H1 (cell line): ENCODE measurements at regions of chr7 and their contacts with region 1.

Region 1: DNA sequence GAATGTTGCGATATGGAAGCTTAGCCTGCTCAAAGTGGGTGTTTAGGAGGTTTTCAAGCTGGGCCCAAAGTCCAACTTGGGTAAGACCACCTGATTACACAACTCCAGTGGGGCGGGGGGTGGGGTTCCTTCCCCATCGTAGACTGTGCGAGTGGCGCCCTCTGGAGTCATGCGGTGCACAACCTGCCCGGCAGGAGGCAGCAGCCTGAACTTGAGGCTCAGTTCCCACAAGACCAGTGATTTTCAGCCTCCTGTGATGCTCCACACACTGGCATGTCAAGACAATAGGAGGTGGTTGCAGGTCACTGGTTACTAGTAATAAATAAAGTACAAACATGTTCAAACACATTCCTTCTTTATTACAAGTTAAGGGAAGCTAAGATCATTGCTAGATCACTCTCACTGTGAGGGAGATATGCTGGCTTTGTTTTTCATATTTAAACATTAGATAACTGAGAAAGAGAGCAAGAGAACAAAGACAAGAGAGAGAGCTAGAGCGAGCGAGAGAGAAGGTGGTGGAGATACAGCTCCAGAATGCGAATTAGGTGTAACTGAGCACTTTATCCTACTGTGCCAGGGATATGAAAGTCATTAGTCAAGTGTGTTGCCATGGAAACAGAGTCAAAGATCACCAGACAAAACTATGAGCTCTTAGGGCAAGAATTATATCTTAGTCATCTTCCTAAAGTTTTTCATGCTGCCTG is 97.4 kb upstream of the BMPER start:
- DNase-seq: peak; percentile 46 to 83
- H3K4me3 ChIP-seq: no peak overlapping the region
- H3K27ac ChIP-seq: no peak overlapping the region
- H3K4me1 ChIP-seq: no peaks in the 10 kb centered on the region
- H3K27me3 ChIP-seq: no peaks in the 10 kb centered on the region
- CTCF ChIP-seq: peak; percentile 85 to 92 (median 87)
- EP300 ChIP-seq: no peak
- POLR2A ChIP-seq: no peak
- RAD21 ChIP-seq: peak; percentile 80 to 86

Region 2: DNA sequence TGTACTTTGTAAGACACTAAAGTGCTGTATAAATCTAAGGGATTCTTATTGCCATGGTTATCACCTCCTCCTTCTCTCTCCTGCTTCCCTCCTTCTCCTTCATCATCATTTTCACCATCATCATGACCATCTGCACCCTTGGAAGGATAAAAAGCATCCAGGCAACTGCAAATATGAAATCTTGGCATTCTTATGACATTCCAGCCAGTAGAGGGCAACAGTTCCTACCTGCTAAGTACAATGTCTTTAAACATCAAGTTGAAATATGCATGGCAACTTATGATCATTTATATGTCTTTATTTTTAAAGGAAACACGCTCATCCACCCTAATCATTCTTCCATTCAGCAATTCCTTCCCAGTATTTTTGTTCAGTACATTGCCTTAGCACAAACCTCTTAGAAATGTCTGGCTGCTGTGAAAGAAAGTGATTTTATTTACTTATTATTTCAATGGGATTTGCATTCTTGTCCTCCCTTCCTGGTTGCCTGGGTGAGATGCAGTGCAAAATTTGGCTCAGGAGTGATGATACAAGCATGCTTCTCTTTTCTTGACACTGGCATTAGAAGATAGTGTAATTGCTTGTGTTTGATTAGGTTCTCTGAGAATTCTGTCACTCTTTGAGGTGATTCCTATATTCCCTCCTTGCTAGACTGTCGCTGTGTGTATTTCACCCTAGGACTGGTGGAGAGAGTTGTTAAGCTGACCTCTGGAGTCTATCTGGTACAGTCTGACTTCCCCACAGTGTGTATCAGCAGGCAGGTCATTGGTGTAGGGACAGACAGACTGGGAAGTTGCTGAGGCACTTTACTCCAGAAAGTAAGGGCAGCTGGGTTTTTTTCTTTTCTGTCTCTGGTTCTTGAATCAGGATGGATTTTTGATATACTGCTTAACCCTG is 91.1 kb before region 1 on chr7:
- CTCF ChIA-PET with region 1: interaction called, 11 read pairs
- POLR2A ChIA-PET with region 1: no interaction called
- DNase-seq: no peak
- H3K4me3 ChIP-seq: no peak overlapping the region
- H3K27ac ChIP-seq: no peak overlapping the region
- H3K4me1 ChIP-seq: no peaks in the 10 kb centered on the region; a peak in 1 of 7 replicates
- H3K27me3 ChIP-seq: no peaks in the 10 kb centered on the region
- CTCF ChIP-seq: peak in 2 of 3 experiments; percentile 35 to 76; a peak in 3 of 4 replicates
- EP300 ChIP-seq: no peak
- POLR2A ChIP-seq: no peak
- RAD21 ChIP-seq: peak; percentile 42 to 53; a peak in 3 of 4 replicates

Region 3: GRCh38 chr7:33774762-33775523 is 33.0 kb before region 1 on chr7:
- CTCF ChIA-PET with region 1: interaction called, 22 read pairs
- POLR2A ChIA-PET with region 1: no interaction called
- DNase-seq: no peak
- H3K4me3 ChIP-seq: no peak overlapping the region
- H3K27ac ChIP-seq: no peak overlapping the region
- H3K4me1 ChIP-seq: no peaks in the 10 kb centered on the region
- H3K27me3 ChIP-seq: no peaks in the 10 kb centered on the region
- CTCF ChIP-seq: no peak
- EP300 ChIP-seq: no peak
- POLR2A ChIP-seq: no peak
- RAD21 ChIP-seq: no peak

Region 4: GRCh38 chr7:33824911-33825459 is 17.1 kb after region 1 on chr7:
- CTCF ChIA-PET with region 1: interaction called, 19 read pairs
- POLR2A ChIA-PET with region 1: no interaction called
- DNase-seq: no peak
- H3K4me3 ChIP-seq: no peak overlapping the region
- H3K27ac ChIP-seq: no peak overlapping the region
- H3K4me1 ChIP-seq: no peaks in the 10 kb centered on the region
- H3K27me3 ChIP-seq: no peaks in the 10 kb centered on the region
- CTCF ChIP-seq: no peak
- EP300 ChIP-seq: no peak
- POLR2A ChIP-seq: no peak
- RAD21 ChIP-seq: no peak

Region 5: GRCh38 chr7:33921216-33921938 is 113.4 kb after region 1 on chr7:
- CTCF ChIA-PET with region 1: interaction called, 11 read pairs
- POLR2A ChIA-PET with region 1: no interaction called
- DNase-seq: no peak
- H3K4me3 ChIP-seq: no peak overlapping the region
- H3K27ac ChIP-seq: no peak overlapping the region
- H3K4me1 ChIP-seq: no peaks in the 10 kb centered on the region
- H3K27me3 ChIP-seq: no peaks in the 10 kb centered on the region
- CTCF ChIP-seq: no peak
- EP300 ChIP-seq: no peak
- POLR2A ChIP-seq: no peak
- RAD21 ChIP-seq: no peak